Head of caudate nucleus (tissue), 42 donors: ENCODE measurements at regions of chr7 and their contacts with region 1.

Region 1: DNA sequence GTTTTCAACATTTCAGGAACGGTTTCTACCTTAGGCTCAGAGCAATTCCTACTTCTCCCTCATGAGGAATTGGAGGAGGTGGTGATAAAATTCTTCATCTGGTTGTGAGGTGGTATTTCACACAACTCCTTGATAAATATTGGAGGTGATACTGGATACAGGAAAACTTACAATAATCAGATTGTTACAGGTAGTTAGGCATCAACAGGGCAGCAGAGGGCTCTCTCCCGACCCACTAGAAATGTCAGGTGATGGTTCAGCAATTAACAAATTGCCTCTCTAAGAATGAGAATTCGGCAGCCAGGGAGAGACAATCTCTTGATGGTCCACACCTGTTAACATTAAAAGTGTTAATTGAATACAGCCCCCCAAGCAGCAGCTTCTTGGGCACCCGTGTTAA is 22.6 kb downstream of the ZNF786 start:
- DNase-seq: no peak

Region 2: GRCh38 chr7:149005241-149006050 is 62.4 kb before region 1 on chr7:
- intact Hi-C with region 1: loop called (anchors 10 kb)
- DNase-seq: peak; percentile 55 to 94 (median 80)

Region 3: DNA sequence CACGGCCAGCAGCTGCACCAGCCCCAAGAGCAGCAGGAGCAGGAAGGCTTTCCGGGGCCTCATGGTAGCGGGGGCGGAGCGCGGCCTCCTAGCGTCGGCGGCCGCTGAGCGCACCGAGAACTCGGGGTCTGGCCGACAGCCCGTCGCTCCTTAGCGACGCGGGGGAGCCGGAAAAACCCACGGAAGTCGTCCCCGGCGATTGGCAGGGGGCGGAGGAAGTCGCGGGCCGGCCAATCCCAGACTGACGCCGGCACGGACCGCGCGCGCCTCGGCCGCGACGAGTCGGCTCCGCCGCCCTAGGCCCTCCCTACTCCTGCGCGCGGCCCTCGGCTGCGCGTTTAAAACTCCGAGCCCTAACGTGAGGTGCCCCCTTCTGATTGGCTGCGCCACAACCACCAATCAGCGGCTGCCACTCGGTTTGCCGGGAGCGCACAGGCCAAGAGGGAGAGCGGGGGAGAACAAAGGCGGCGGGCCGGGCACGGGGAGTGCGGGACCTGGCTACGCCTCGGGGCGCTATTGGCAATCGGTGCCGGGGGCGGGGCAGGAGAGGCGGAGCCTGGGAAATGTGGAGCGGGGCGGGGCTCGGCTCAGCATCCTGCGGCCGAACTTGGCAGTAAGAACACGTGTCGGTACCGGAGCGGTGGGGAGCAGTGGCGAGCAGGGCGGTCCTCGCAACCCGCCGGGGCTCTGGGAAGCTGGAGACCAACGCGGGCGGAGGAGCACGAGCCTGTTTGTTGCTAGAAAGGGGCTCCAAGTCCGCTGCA is 39.3 kb before region 1 on chr7 and contains the start of gene PDIA4:
- intact Hi-C with region 1: loop called (anchors 5 kb)
- DNase-seq: peak; percentile 99 to 100 (median 100)